CD4-positive, alpha-beta T cell (primary cell): ENCODE measurements at regions of chr11 and their contacts with region 1.

Region 1: DNA sequence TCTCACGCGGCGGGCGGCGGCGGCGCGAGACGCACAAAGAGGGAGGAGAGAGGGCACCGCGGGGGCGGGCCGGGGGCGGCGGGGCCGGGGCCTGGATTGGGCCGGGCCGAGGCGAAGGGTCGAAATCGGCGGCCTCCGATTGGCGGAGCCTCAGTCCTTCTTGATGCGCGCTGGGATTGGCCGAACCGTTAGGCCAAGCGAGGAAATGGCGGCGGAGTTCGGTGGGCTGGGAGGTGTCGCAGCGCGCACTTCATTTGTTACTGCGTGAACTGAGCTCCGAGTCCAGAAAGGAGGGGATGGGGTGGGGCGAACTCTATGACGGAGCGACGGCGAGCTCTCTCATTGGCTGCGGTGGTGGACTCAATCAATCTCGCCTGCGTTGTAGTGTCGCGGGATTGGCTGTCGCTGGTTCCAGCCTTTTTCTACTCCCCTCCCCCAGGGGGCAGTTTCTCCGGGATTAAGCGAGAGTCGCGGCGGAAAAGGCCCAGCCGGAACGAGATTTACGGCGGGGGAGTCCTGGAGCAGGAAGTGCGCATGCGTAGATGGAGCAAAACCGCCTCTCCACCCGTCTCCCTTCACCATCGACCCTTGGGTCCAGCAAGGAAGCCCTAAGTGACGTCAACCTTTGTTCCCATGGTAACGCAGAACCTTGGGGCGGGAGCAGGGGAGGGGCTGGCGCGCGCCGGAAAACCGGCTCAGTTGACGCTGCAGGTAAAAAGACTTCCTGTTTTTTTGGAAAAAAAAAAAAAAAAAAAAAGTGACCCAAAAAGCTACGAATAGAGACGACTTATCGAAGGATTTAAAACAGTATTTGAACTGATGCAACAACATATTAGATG is at the start of gene SF1:
- DNase-seq: peak; percentile 96 to 100 (median 98)
- ATAC-seq: peak; percentile 81
- H3K4me3 ChIP-seq: peak within 1 kb of the TSS; percentile 74
- H3K4me3 Mint-ChIP-seq: peak within 1 kb of the TSS; percentile 95
- H3K27ac ChIP-seq: peak within 1 kb of the TSS; percentile 94 to 98
- H3K27ac Mint-ChIP-seq: peak within 1 kb of the TSS; percentile 99
- H3K4me1 ChIP-seq: peaks cover 52% of the 10 kb centered on the region
- H3K4me1 Mint-ChIP-seq: peaks cover 70% of the 10 kb centered on the region
- H3K27me3 ChIP-seq: no peaks in the 10 kb centered on the region
- H3K27me3 Mint-ChIP-seq: no peaks in the 10 kb centered on the region
- CTCF ChIP-seq: peak; percentile 14
- total RNA-seq, gene SF1: 1,632 to 1,657 TPM

Region 2: GRCh38 chr11:63080682-63081081 is 1698.0 kb before region 1 on chr11:
- CTCF ChIA-PET with region 1: no interaction called
- POLR2A ChIA-PET with region 1: no interaction called
- intact Hi-C with region 1: no loop called
- DNase-seq: no peak
- ATAC-seq: no peak
- H3K4me3 ChIP-seq: no peak overlapping the region
- H3K4me3 Mint-ChIP-seq: no peak overlapping the region
- H3K27ac ChIP-seq: no peak overlapping the region
- H3K27ac Mint-ChIP-seq: no peak overlapping the region
- H3K4me1 ChIP-seq: no peaks in the 10 kb centered on the region
- H3K4me1 Mint-ChIP-seq: no peaks in the 10 kb centered on the region
- H3K27me3 ChIP-seq: peaks cover 0 to 22% of the 10 kb centered on the region in 2 experiments
- H3K27me3 Mint-ChIP-seq: peaks cover 49% of the 10 kb centered on the region
- CTCF ChIP-seq: no peak

Region 3: GRCh38 chr11:64767344-64768299 is 11.1 kb before region 1 on chr11:
- CTCF ChIA-PET with region 1: interaction called, 4 read pairs
- POLR2A ChIA-PET with region 1: interaction called, 363 read pairs
- intact Hi-C with region 1: loop called in 1 of 2 experiments (anchors 1 kb)
- DNase-seq: peak; percentile 65 to 91 (median 82)
- ATAC-seq: peak; percentile 24
- H3K4me3 ChIP-seq: no peak overlapping the region
- H3K4me3 Mint-ChIP-seq: peak overlapping the region; percentile 84
- H3K27ac ChIP-seq: peak overlapping the region; percentile 65 to 72
- H3K27ac Mint-ChIP-seq: peak overlapping the region; percentile 85
- H3K4me1 ChIP-seq: peaks cover 92% of the 10 kb centered on the region
- H3K4me1 Mint-ChIP-seq: peaks cover 87% of the 10 kb centered on the region
- H3K27me3 ChIP-seq: no peaks in the 10 kb centered on the region
- H3K27me3 Mint-ChIP-seq: no peaks in the 10 kb centered on the region
- CTCF ChIP-seq: peak; percentile 74

Region 4: GRCh38 chr11:64803163-64803845 is 24.6 kb after region 1 on chr11 and contains the start of gene MAP4K2:
- CTCF ChIA-PET with region 1: interaction called, 3 read pairs
- POLR2A ChIA-PET with region 1: interaction called, 90 read pairs
- intact Hi-C with region 1: no loop called
- DNase-seq: peak; percentile 67 to 97 (median 83)
- ATAC-seq: peak; percentile 86
- H3K4me3 ChIP-seq: peak within 1 kb of the TSS; percentile 85
- H3K4me3 Mint-ChIP-seq: peak within 1 kb of the TSS; percentile 91
- H3K27ac ChIP-seq: peak within 1 kb of the TSS; percentile 86 to 95
- H3K27ac Mint-ChIP-seq: peak within 1 kb of the TSS; percentile 91
- H3K4me1 ChIP-seq: peaks cover 41% of the 10 kb centered on the region
- H3K4me1 Mint-ChIP-seq: peaks cover 38% of the 10 kb centered on the region
- H3K27me3 ChIP-seq: no peaks in the 10 kb centered on the region
- H3K27me3 Mint-ChIP-seq: no peaks in the 10 kb centered on the region
- CTCF ChIP-seq: no peak
- total RNA-seq, gene MAP4K2: 71.9 to 74.1 TPM

Region 5: GRCh38 chr11:64846998-64847666 is 68.4 kb after region 1 on chr11:
- CTCF ChIA-PET with region 1: interaction called, 5 read pairs
- POLR2A ChIA-PET with region 1: interaction called, 20 read pairs
- intact Hi-C with region 1: no loop called
- DNase-seq: peak; percentile 87 to 98 (median 92)
- ATAC-seq: peak; percentile 62
- H3K4me3 ChIP-seq: no peak overlapping the region
- H3K4me3 Mint-ChIP-seq: peak overlapping the region; percentile 76
- H3K27ac ChIP-seq: no peak overlapping the region
- H3K27ac Mint-ChIP-seq: peak overlapping the region; percentile 85
- H3K4me1 ChIP-seq: peaks cover 77% of the 10 kb centered on the region
- H3K4me1 Mint-ChIP-seq: peaks cover 64% of the 10 kb centered on the region
- H3K27me3 ChIP-seq: no peaks in the 10 kb centered on the region
- H3K27me3 Mint-ChIP-seq: no peaks in the 10 kb centered on the region
- CTCF ChIP-seq: peak; percentile 97

Region 6: GRCh38 chr11:64878494-64879243 is 99.9 kb after region 1 on chr11 and contains the start of gene EHD1:
- CTCF ChIA-PET with region 1: no interaction called
- POLR2A ChIA-PET with region 1: interaction called, 10 read pairs
- intact Hi-C with region 1: loop called in 1 of 2 experiments (anchors 5 kb)
- DNase-seq: peak; percentile 99 to 100 (median 100)
- ATAC-seq: peak; percentile 81
- H3K4me3 ChIP-seq: peak within 1 kb of the TSS; percentile 100
- H3K4me3 Mint-ChIP-seq: peak within 1 kb of the TSS; percentile 98
- H3K27ac ChIP-seq: peak within 1 kb of the TSS; percentile 95 to 97
- H3K27ac Mint-ChIP-seq: peak within 1 kb of the TSS; percentile 92
- H3K4me1 ChIP-seq: peaks cover 72% of the 10 kb centered on the region
- H3K4me1 Mint-ChIP-seq: peaks cover 62% of the 10 kb centered on the region
- H3K27me3 ChIP-seq: no peaks in the 10 kb centered on the region
- H3K27me3 Mint-ChIP-seq: no peaks in the 10 kb centered on the region
- CTCF ChIP-seq: peak; percentile 58
- total RNA-seq, gene EHD1: 132 to 139 TPM

Region 7: DNA sequence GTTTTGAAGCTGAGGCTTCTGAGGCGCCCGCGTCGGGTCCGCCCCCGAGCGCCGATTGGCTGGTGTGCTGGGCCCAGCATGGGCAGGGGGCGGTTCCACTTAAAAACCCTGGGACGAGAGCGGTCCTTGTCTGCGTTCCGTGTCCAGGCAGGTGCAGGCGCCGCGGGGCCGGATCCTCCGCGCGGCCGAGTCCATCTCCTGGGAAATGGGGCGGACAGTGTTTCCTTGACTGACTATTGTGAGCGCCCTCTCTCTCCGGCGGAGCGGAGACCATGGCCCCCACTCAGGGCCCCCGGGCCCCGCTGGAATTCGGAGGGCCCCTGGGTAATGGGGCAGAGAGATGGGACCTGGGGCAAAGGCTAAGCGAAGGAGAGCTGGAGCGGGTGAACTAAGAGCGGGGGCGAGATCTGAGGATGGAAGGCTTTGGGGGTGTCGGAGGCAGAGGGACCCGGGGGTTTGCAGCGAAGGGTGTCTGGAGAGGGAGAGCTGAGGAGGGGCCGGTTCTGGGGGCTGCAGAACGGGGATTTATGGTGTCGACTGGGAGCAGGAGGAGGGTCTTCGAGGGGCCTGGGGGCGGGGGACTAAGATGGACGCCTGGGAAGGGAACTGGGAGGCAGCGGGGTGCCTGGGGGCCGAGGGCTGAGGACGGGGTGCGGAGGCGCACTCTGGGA is 333.2 kb after region 1 on chr11 and contains the start of gene TM7SF2:
- CTCF ChIA-PET with region 1: interaction called, 5 read pairs
- POLR2A ChIA-PET with region 1: interaction called, 11 read pairs
- intact Hi-C with region 1: no loop called
- DNase-seq: peak; percentile 88 to 98 (median 94)
- ATAC-seq: peak; percentile 75
- H3K4me3 ChIP-seq: peak within 1 kb of the TSS; percentile 81
- H3K4me3 Mint-ChIP-seq: peak within 1 kb of the TSS; percentile 95
- H3K27ac ChIP-seq: peak within 1 kb of the TSS; percentile 62 to 68
- H3K27ac Mint-ChIP-seq: peak within 1 kb of the TSS; percentile 92
- H3K4me1 ChIP-seq: peaks cover 63% of the 10 kb centered on the region
- H3K4me1 Mint-ChIP-seq: peaks cover 36% of the 10 kb centered on the region
- H3K27me3 ChIP-seq: no peaks in the 10 kb centered on the region
- H3K27me3 Mint-ChIP-seq: no peaks in the 10 kb centered on the region
- CTCF ChIP-seq: no peak
- total RNA-seq, gene TM7SF2: 20.0 to 20.4 TPM